PC-9 (cell line): ENCODE measurements at regions of chr9 and their contacts with region 1.

Region 1: DNA sequence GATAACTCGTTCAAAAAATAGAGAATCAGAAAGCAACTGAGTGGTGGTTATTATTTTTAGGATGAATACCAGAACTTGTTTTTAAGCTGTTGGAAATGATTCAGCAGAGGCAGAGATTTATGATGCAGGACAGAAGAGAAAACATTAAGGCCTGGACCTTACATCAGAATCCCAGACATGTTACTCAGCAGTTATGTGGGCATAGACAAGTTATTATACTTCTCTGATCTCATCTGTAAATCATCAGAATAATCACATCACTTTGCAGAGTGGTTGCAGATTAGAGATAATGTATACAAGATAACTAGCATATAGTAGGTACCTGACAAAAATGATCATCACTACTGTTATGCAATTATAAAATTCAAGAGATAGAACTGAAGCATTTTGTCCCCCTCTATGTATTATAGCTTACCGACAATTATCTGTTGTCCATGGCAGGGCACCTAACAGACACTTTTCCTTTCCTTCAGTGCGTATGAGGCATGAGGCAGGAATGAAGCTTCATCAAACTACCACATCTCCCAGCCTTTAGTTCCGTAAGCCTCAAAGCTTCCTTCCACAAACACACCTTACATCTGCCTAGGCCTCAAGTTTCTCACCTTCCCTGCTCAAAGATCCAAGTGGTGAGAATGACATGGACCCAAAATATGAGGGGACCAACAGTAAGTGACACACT is 165.9 kb downstream of the DENND1A start:
- DNase-seq: no peak
- H3K4me3 ChIP-seq: no peak overlapping the region
- H3K27ac ChIP-seq: no peak overlapping the region
- H3K4me1 ChIP-seq: no peaks in the 10 kb centered on the region
- H3K27me3 ChIP-seq: no peaks in the 10 kb centered on the region
- CTCF ChIP-seq: no peak

Region 2: DNA sequence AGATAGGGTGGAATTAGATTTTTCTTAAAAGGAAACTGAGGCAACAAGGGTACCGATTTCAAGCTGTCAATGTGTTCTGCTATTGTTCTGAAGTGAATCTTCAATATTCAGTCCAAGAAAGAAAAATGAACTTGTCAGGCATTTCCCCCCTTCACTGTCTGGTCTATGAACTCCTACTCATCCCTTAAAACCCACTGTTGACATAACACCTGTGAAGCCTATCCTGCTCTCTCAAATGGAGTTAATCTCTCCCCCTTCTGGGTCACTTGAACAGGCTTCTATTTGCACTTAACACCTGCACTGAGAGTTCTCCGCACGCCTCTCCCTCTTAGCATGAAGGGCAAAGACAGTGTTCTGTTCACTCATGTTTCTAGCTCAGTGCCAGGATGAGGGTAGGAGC is 263.7 kb before region 1 on chr9:
- CTCF ChIA-PET with region 1: no interaction called
- POLR2A ChIA-PET with region 1: no interaction called
- intact Hi-C with region 1: loop called (anchors 5 kb)
- DNase-seq: no peak
- H3K4me3 ChIP-seq: no peak overlapping the region
- H3K27ac ChIP-seq: no peak overlapping the region
- H3K4me1 ChIP-seq: no peaks in the 10 kb centered on the region
- H3K27me3 ChIP-seq: no peaks in the 10 kb centered on the region
- CTCF ChIP-seq: no peak

Region 3: GRCh38 chr9:123686131-123686828 is 77.8 kb before region 1 on chr9:
- CTCF ChIA-PET with region 1: no interaction called
- POLR2A ChIA-PET with region 1: no interaction called
- intact Hi-C with region 1: no loop called
- DNase-seq: peak; percentile 36 to 49
- H3K4me3 ChIP-seq: no peak overlapping the region
- H3K27ac ChIP-seq: no peak overlapping the region
- H3K4me1 ChIP-seq: peaks cover 12% of the 10 kb centered on the region
- H3K27me3 ChIP-seq: no peaks in the 10 kb centered on the region
- CTCF ChIP-seq: no peak